Naive thymus-derived CD8-positive, alpha-beta T cell (primary cell): ENCODE measurements at regions of chr9 and their contacts with region 1.

Region 1: DNA sequence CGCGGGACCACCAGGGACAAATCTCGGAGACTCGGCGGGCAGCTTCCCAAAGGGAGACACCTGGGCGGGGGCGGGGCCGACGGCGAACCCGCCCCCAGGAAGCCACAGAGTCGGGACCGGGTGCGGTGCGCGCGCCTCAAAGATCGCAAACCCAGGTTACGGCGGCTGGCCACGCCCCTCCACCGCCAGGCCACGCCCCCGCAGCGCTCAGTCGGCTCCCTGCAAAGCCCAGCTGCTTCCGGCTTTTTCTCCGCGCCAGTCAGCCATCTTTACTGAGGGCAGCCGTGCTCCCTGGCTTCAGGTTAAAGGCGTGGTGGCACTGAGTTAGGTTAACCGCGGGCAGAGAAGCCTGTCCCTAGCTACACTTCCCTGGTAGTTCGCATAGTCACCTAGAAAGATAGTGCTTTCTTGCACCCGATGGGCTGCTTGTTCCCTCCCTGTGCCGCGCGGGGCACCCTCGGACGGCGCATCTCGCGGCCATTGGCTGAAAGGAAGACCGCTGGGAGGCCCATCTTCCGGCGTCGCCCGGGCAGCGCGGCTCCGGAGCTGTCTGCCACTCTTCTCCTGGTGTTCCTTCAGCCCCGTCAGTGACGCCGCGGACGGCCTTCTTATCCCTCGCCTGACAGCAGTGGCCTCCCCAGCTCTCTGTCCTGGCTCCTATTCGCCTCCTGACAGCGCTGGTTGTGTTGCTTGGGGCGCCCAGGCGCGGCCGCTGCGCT is at the start of gene TBC1D2:
- DNase-seq: peak; percentile 95 to 99 (median 98)
- ATAC-seq: peak; percentile 85 to 87
- H3K4me3 Mint-ChIP-seq: peak within 1 kb of the TSS; percentile 93 to 98 (median 96)
- H3K27ac Mint-ChIP-seq: peak within 1 kb of the TSS; percentile 94 to 98 (median 96)
- H3K4me1 Mint-ChIP-seq: peaks cover 19 to 40% (median 35%) of the 10 kb centered on the region in 4 donors
- H3K27me3 Mint-ChIP-seq: no peaks in the 10 kb centered on the region
- polyA plus RNA-seq, gene TBC1D2: 2.0 to 5.9 (median 2.8) TPM

Region 2: GRCh38 chr9:97696803-97697601 is 558.7 kb before region 1 on chr9 and contains the start of gene XPA:
- POLR2A ChIA-PET with region 1: interaction called, 16 read pairs
- DNase-seq: peak; percentile 94 to 98 (median 96)
- ATAC-seq: peak; percentile 92 to 93
- H3K4me3 Mint-ChIP-seq: peak within 1 kb of the TSS; percentile 89 to 95 (median 92)
- H3K27ac Mint-ChIP-seq: peak within 1 kb of the TSS; percentile 90 to 98 (median 95)
- H3K4me1 Mint-ChIP-seq: peaks cover 33 to 65% (median 58%) of the 10 kb centered on the region in 4 donors
- H3K27me3 Mint-ChIP-seq: peaks cover 0 to 12% (median 3%) of the 10 kb centered on the region in 5 donors
- polyA plus RNA-seq, gene XPA: 34.8 to 39.2 (median 35.1) TPM

Region 3: DNA sequence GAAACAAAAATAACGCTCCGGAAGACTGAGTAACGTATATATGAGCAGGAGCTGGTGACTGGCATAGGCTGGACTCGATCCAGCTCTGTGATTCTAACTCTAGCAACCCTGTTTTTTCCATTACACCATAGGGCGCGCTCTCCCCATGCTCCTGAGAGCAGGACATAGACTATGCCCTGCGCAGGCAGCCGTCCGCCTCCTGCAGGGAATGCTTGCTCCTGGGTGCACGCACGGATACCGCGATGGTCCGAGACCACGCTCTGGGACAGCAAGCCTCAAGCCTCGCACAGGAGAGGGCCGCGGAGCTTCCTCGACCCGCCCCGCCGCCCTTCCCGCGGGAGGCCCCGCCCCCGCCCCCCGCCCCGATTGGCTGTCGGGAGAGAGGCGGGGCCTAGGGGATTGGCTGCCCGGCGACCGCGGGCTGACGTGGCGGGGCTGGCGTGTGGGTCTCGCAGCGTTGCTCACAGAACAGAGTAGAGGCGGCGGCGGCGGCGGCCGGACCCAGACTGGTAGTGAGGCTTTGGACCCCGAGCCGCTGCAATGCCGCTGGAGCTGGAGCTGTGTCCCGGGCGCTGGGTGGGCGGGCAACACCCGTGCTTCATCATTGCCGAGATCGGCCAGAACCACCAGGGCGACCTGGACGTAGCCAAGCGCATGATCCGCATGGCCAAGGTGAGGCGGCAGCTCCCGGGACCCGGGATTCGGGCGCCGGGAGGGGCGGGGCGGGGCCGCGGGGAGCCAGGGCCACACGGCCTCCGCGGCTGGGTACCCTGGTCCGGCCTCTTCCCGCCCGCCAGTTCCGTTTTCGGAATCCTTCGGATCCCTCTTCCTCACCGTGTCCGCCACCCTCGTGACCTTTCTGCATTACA is 199.2 kb before region 1 on chr9 and contains the start of gene NANS:
- POLR2A ChIA-PET with region 1: interaction called, 37 read pairs
- DNase-seq: peak; percentile 86 to 95 (median 88)
- ATAC-seq: peak; percentile 92 to 93
- H3K4me3 Mint-ChIP-seq: peak within 1 kb of the TSS; percentile 90 to 99 (median 96)
- H3K27ac Mint-ChIP-seq: peak within 1 kb of the TSS; percentile 88 to 98 (median 96)
- H3K4me1 Mint-ChIP-seq: peaks cover 8 to 35% (median 25%) of the 10 kb centered on the region in 4 donors
- H3K27me3 Mint-ChIP-seq: no peaks in the 10 kb centered on the region
- polyA plus RNA-seq, gene NANS: 28.9 to 32.4 (median 30.9) TPM

Region 4: GRCh38 chr9:98101868-98102273 is 153.9 kb before region 1 on chr9:
- POLR2A ChIA-PET with region 1: interaction called, 71 read pairs
- DNase-seq: peak; percentile 59 to 94 (median 80)
- ATAC-seq: peak; percentile 96 to 98
- H3K4me3 Mint-ChIP-seq: peak overlapping the region; percentile 60 to 86 (median 74)
- H3K27ac Mint-ChIP-seq: peak overlapping the region; percentile 88 to 99 (median 96)
- H3K4me1 Mint-ChIP-seq: peaks cover 38 to 93% (median 84%) of the 10 kb centered on the region in 4 donors
- H3K27me3 Mint-ChIP-seq: no peaks in the 10 kb centered on the region

Region 5: DNA sequence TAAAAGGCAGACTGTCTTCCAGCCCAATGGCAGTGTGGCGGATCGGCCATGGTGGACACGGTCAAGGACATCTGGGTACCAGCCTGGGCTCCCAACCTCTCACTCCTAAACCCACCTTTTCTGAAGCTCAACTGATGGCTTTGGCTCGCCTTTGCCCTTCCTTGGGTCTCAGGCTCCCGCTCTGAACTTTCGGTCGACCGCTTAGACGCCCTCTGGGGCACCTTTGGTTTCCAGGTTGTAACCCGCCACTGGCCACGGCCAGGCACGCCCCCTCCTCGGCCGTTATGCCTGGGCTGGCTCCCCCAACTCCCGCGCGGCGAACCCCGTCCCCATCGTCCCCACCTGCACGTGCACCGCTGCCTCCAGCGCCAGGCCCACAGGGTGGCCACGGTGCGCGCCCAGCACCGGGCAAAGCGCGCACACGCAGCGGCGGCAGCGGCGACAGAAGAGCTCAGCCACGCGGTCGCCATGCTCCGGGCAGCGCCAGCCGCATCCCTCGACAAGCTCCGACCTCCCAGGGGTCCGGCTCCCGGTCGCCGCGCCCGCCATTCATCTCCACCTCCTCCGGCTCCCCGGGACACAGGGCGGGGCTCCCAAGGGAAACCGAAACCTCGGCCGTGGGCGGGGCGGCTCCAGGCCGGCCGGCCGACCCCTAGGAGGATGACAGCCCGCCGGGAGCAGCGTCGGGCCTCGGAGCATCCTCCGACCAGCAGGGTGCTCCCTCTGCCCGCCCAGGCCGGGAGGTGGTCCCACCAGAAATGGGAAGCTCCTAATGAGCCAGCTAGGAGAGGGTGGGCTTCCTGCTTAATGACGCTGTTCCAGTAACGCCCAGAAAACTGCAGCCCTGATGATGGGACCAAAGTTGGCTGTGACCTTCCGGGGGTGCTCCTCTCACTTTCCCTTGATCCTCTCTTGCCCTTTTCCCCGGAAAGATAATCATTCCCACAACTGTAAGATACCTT is 136.8 kb before region 1 on chr9 and contains the start of gene TRIM14:
- POLR2A ChIA-PET with region 1: interaction called, 54 read pairs
- DNase-seq: peak in 8 of 10 donors; percentile 21 to 59 (median 46)
- ATAC-seq: peak; percentile 50 to 67
- H3K4me3 Mint-ChIP-seq: peak within 1 kb of the TSS; percentile 86 to 99 (median 92)
- H3K27ac Mint-ChIP-seq: peak within 1 kb of the TSS; percentile 92 to 99 (median 96)
- H3K4me1 Mint-ChIP-seq: peaks cover 23 to 65% (median 55%) of the 10 kb centered on the region in 4 donors
- H3K27me3 Mint-ChIP-seq: no peaks in the 10 kb centered on the region
- polyA plus RNA-seq, gene TRIM14: 48.7 to 84.0 (median 68.4) TPM

Region 6: DNA sequence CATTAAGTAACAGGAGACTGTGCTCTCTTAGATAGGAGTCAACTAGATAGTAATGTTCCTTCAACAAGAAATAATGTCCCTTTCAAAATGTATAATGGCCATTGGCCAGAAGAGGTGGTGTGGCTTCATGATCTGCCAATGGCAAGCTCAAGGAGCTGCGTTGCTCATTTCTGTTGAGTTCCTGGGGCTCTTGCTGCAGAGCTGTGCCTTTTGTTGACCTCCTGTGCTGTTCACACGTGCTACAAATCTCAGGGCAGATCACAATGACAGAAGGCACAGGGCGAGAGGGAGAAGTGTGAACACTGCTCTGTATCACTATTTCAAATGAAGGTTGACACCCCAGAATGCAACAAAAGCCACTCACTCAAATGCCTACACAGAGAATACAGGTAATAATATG is 15.7 kb after region 1 on chr9:
- POLR2A ChIA-PET with region 1: no interaction called
- DNase-seq: no peak
- ATAC-seq: no peak
- H3K4me3 Mint-ChIP-seq: no peak overlapping the region
- H3K27ac Mint-ChIP-seq: no peak overlapping the region
- H3K4me1 Mint-ChIP-seq: peaks cover 0 to 2% (median 0%) of the 10 kb centered on the region in 4 donors
- H3K27me3 Mint-ChIP-seq: peaks cover 8 to 48% (median 28%) of the 10 kb centered on the region in 5 donors